ENCODE measurements at regions of chr2 and their contacts with region 1.

Region 1: DNA sequence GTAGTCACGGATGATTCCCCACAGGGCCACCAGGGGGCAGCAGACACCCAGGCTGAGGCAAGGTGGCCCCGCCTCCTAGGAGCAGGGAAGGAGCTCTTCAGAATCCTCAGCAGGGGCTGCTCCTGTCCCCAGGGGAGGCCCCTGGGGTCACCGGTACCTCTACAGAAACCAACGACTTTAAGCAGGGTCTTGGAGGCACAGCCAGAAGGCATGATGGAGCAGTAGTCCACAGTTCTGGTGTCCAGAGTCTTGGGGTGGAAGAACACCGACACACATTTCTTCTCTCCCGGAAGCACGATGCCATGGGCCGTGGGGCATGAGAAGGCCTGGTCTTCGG is 11.5 kb downstream of the CFAP65 start:
- DNase-seq: peak; percentile 89
- ATAC-seq: peak; percentile 96
- H3K4me3 Mint-ChIP-seq: no peak overlapping the region
- H3K27ac Mint-ChIP-seq: 0 out of 2 replicates have a peak overlapping the region, but pooled peaks have one; percentile 26
- H3K4me1 Mint-ChIP-seq: peaks cover 3% of the 10 kb centered on the region
- H3K27me3 Mint-ChIP-seq: no peaks in the 10 kb centered on the region; the same call in 1 of the 2 replicates
- CTCF ChIP-seq: peak; percentile 94

Region 2: GRCh38 chr2:218788529-218789255 is 241.1 kb before region 1 on chr2:
- CTCF ChIA-PET with region 1: no interaction called
- POLR2A ChIA-PET with region 1: no interaction called
- DNase-seq: no peak
- ATAC-seq: no peak
- H3K4me3 Mint-ChIP-seq: no peak overlapping the region
- H3K27ac Mint-ChIP-seq: no peak overlapping the region
- H3K4me1 Mint-ChIP-seq: no peaks in the 10 kb centered on the region
- H3K27me3 Mint-ChIP-seq: peaks cover 15% of the 10 kb centered on the region
- CTCF ChIP-seq: no peak

Region 3: GRCh38 chr2:218839430-218839829 is 190.4 kb before region 1 on chr2:
- CTCF ChIA-PET with region 1: no interaction called
- POLR2A ChIA-PET with region 1: no interaction called
- DNase-seq: no peak
- ATAC-seq: no peak
- H3K4me3 Mint-ChIP-seq: no peak overlapping the region
- H3K27ac Mint-ChIP-seq: no peak overlapping the region
- H3K4me1 Mint-ChIP-seq: no peaks in the 10 kb centered on the region
- H3K27me3 Mint-ChIP-seq: peaks cover 14% of the 10 kb centered on the region
- CTCF ChIP-seq: no peak

Region 4: DNA sequence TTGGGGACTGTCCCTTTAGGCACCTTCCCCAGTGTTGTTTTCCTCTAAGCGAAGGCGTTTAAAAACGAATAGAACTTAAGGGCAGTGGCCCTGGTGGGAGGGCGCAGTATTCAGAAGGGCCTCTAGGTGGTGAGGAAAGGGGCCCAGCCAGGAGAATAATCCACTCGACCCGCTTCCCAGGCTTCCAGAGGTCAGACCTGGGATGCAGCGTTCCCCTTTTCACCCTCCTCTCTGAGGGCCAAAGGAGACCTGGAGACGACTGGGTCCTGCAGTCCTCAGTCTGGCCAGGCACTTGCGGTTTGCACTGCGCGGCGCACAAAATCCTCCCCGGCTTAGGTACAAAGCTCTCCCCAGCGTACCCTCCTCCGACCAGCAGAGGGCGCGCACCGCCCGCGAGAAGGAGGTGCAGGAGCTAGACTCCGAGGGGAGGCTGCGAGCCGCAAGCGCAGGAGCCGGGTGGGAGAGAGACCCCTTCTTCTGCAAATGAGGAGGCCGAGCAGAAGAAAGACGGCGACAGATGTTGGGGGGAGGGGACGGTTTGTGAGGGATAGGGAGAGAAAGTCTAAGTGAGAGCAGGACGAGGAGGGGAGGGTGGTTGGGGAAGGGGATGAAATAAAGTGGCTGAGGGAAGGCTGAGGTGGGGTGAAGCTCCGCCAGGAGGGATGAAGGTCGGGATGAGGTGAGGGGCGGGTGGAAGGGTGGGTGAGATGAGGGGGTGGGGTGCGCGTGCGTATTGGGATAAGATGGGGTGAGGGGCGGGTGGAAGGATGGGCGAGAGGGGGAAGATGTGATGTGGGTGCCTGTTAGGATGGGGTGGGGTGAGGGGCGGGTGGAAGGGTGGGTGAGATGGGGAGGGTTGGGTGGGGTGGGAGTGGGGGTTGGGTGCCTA is 49.7 kb before region 1 on chr2:
- CTCF ChIA-PET with region 1: interaction called, 17 read pairs
- POLR2A ChIA-PET with region 1: no interaction called
- DNase-seq: peak; percentile 96
- ATAC-seq: peak; percentile 80
- H3K4me3 Mint-ChIP-seq: peak overlapping the region; percentile 60
- H3K27ac Mint-ChIP-seq: no peak overlapping the region
- H3K4me1 Mint-ChIP-seq: peaks cover 25% of the 10 kb centered on the region
- H3K27me3 Mint-ChIP-seq: peaks cover 99% of the 10 kb centered on the region
- CTCF ChIP-seq: peak; percentile 74; the same call in 1 of the 2 replicates

Region 5: GRCh38 chr2:219041252-219041651 is 11.5 kb after region 1 on chr2 and contains the start of gene CFAP65:
- CTCF ChIA-PET with region 1: interaction called, 75 read pairs
- POLR2A ChIA-PET with region 1: no interaction called
- DNase-seq: peak; percentile 69
- ATAC-seq: peak; percentile 91
- H3K4me3 Mint-ChIP-seq: peak within 1 kb of the TSS; percentile 86
- H3K27ac Mint-ChIP-seq: 0 out of 2 replicates have a peak within 1 kb of the TSS, but pooled peaks have one; percentile 8
- H3K4me1 Mint-ChIP-seq: peaks cover 4% of the 10 kb centered on the region; the same call in 1 of the 2 replicates
- H3K27me3 Mint-ChIP-seq: peaks cover 30% of the 10 kb centered on the region
- CTCF ChIP-seq: no peak
- total RNA-seq, gene CFAP65: 0.44 to 1.0 TPM (median 0.48 TPM) in 3 replicates

Region 6: GRCh38 chr2:219079417-219079816 is 49.6 kb after region 1 on chr2:
- CTCF ChIA-PET with region 1: interaction called, 18 read pairs
- POLR2A ChIA-PET with region 1: no interaction called
- DNase-seq: no peak
- ATAC-seq: no peak
- H3K4me3 Mint-ChIP-seq: no peak overlapping the region
- H3K27ac Mint-ChIP-seq: no peak overlapping the region
- H3K4me1 Mint-ChIP-seq: 0 out of 2 replicates have a peak, but pooled peaks cover 6% of the 10 kb centered on the region
- H3K27me3 Mint-ChIP-seq: no peaks in the 10 kb centered on the region
- CTCF ChIP-seq: no peak

Region 7: GRCh38 chr2:219119422-219120043 is 89.7 kb after region 1 on chr2:
- CTCF ChIA-PET with region 1: interaction called, 61 read pairs
- POLR2A ChIA-PET with region 1: no interaction called
- DNase-seq: peak; percentile 81
- ATAC-seq: peak; percentile 78
- H3K4me3 Mint-ChIP-seq: no peak overlapping the region
- H3K27ac Mint-ChIP-seq: no peak overlapping the region
- H3K4me1 Mint-ChIP-seq: peaks cover 21% of the 10 kb centered on the region
- H3K27me3 Mint-ChIP-seq: no peaks in the 10 kb centered on the region
- CTCF ChIP-seq: peak; percentile 59

Region 8: DNA sequence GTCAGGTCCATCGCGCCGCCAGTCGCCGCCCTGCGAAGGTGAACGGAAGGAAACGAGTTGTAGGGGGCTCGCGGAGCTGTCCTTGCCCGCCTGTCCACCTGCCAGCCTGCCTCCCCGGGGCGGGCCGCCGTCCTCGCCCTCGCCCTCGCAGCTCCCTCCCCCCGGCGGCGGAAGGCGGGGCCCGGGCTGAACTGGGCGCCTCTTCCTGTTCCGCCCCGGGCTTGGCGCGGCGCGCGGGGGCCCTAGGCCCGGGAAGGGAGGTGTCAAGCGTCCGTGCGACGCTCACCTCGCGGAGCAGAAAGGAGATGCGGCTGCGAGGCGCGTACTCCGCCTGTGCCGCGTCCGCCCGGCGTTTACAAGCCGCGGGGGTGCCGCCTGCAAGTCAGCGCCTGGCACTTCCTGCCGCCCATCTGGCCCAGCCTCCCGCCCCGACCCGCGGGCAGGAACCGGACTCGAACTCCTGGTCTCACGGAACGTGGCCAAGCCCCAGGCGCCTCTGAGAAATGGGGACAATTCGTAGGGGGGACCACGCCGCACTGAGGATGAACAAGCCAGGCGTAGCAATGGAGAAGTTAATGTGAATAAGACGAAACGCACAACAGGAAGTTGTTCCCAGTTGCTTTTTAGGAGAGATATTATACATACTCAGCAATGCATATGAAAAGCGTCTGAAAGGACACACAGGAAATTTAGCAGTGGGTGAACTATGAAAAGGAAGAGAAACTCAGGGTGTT is 147.2 kb after region 1 on chr2 and contains the start of gene CNPPD1:
- CTCF ChIA-PET with region 1: interaction called, 11 read pairs
- POLR2A ChIA-PET with region 1: no interaction called
- DNase-seq: peak; percentile 76
- ATAC-seq: peak; percentile 55
- H3K4me3 Mint-ChIP-seq: peak within 1 kb of the TSS; percentile 88
- H3K27ac Mint-ChIP-seq: peak within 1 kb of the TSS; percentile 98
- H3K4me1 Mint-ChIP-seq: peaks cover 19% of the 10 kb centered on the region
- H3K27me3 Mint-ChIP-seq: no peaks in the 10 kb centered on the region
- CTCF ChIP-seq: no peak
- total RNA-seq, gene CNPPD1: 26.7 to 32.8 TPM (median 29.5 TPM) in 3 replicates

Region 9: GRCh38 chr2:219856602-219857001 is 826.8 kb after region 1 on chr2:
- CTCF ChIA-PET with region 1: no interaction called
- POLR2A ChIA-PET with region 1: no interaction called
- DNase-seq: no peak
- ATAC-seq: no peak
- H3K4me3 Mint-ChIP-seq: no peak overlapping the region
- H3K27ac Mint-ChIP-seq: no peak overlapping the region
- H3K4me1 Mint-ChIP-seq: peaks cover 19% of the 10 kb centered on the region
- H3K27me3 Mint-ChIP-seq: peaks cover 37% of the 10 kb centered on the region
- CTCF ChIP-seq: no peak